Lower leg skin (tissue), 4 donors: ENCODE measurements at regions of chr4 and their contacts with region 1.

Region 1: DNA sequence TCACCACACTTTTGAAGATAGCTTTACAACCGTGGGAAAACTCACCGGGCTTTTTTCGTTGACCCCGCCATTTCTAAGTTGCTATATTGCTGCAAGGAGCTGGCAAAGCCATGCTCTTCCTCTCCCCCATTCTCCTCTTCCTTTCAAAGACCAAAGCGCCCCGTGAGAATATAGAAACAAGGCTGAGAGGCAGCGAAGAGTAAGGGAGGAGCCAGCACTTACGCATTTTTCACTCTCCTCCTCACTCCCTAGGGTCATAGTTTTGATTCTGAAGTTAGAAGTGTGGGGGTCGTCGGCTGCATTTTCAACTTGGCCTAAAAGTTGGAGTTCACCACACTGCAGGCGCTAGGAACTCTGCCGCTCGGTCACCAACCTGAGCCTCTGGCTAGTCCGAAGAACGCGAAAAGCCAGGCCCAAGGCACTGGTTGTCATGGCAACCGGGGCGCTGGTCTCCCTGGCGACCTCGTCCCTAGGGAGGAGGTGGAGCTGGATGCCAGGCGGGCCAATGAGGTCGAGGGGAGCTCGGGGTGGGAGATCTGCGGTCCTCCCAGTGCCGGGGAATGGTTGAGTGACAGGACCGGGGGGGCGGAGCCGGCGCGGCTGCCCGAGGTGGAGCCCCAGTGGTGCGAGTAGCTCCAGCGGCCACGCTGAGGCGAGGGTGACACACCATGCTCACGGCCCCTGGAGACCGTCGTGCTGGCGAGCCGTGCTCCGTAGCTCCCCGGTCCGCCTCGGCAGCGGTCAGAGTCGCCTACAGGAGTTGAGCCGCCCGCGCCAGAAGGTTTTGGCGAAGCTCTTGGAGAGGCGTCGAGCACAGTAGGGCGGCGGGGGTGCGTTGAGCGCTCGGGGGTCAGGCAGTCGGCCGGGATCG is at the start of gene PTPN13:
- DNase-seq: peak; percentile 95 to 99
- H3K4me3 ChIP-seq: peak within 1 kb of the TSS; percentile 80
- CTCF ChIP-seq: no peak
- POLR2A ChIP-seq: no peak
- total RNA-seq, gene PTPN13: 98.7 to 135 (median 113) TPM

Region 2: DNA sequence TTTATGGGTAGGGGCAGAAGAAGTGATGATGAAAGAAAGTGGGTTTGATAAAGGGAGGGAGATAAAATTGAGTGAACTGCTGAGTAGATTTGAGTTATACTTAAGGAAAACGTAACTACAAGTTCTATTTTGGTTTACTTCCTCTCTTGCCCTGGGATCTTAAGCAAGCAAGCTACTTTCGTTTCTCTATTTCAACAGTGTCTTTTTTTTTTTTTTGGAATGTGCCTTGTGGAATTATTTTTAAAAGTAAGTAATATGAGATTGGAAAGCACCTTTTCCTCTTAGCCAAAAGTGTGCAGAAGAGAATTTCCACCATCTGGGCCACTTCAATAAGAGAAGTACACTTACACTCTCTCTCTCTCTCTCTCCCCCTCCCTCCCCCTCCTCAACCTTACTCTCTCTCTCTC is 314.3 kb after region 1 on chr4:
- intact Hi-C with region 1: loop called (anchors 10 kb)
- DNase-seq: no peak
- H3K4me3 ChIP-seq: no peak overlapping the region
- CTCF ChIP-seq: no peak
- POLR2A ChIP-seq: no peak